ENCODE measurements at regions of chr11 and their contacts with region 1.

Region 1: GRCh38 chr11:125091247-125091876 is 20.1 kb downstream of the TMEM218 start:
- DNase-seq: no peak
- ATAC-seq: peak; percentile 86
- H3K4me3 ChIP-seq: no peak overlapping the region
- H3K27ac ChIP-seq: no peak overlapping the region
- H3K4me1 ChIP-seq: no peaks in the 10 kb centered on the region
- H3K27me3 ChIP-seq: no peaks in the 10 kb centered on the region
- CTCF ChIP-seq: peak; percentile 43 to 66 (median 54); a peak in 4 of 6 replicates
- EP300 ChIP-seq: no peak
- POLR2A ChIP-seq: no peak
- RAD21 ChIP-seq: peak; percentile 80

Region 2: DNA sequence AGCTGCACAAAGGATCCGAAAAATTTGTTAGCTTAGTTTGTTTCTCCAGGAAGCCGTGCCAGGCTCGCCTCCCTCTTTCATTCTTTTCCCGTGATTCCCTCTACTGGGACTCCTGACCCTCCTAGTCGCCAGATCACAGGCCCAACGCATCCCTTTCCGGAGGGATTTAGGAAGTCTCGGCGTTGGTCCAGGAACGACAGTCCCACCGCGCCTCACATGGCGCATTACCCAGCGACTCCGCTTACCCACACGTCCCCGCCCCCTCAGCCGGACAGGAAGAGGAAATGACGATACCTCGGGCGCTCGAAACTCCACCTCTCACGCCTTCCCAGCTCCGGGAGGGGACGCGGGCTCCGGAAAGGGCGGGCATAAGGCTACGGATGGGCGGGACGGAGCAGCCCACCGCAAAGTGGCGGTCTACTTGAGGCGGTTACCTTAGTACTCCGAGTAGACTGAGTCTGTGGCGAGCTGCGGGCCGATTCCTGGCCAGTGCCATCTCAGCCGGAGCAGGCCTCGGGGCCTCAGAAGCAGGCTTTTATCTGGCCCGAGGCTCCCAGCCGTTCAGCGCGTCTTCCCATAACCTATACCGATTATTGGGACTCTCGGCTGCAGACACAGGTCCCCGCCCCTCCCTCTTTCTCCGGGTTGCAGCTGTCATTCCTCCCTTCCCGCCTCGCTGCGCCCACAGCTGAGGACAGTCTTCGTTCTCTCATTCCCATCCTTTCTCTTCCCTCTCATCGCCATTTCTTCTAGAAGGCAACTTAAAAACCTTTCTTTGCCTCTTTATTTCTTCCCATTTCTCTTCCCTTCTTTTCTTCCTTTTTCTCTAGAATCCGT is 137.4 kb before region 1 on chr11 and contains the start of gene CCDC15:
- CTCF ChIA-PET with region 1: interaction called, 11 read pairs
- POLR2A ChIA-PET with region 1: no interaction called
- RAD21 ChIA-PET with region 1: interaction called, 3 read pairs
- SMC1A ChIA-PET with region 1: no interaction called
- in situ Hi-C with region 1: no loop called
- intact Hi-C with region 1: no loop called
- DNase-seq: peak; percentile 87
- ATAC-seq: peak; percentile 99
- H3K4me3 ChIP-seq: peak within 1 kb of the TSS; percentile 79
- H3K27ac ChIP-seq: peak within 1 kb of the TSS; percentile 54
- H3K4me1 ChIP-seq: no peaks in the 10 kb centered on the region; the same call in 1 of the 2 replicates
- H3K27me3 ChIP-seq: no peaks in the 10 kb centered on the region
- CTCF ChIP-seq: no peak
- EP300 ChIP-seq: 0 out of 4 replicates have a peak, but pooled peaks of 1 of the 2 experiments have one; percentile 18
- POLR2A ChIP-seq: peak; percentile 99
- RAD21 ChIP-seq: no peak
- polyA plus RNA-seq, gene CCDC15: 2.0 to 2.8 TPM

Region 3: DNA sequence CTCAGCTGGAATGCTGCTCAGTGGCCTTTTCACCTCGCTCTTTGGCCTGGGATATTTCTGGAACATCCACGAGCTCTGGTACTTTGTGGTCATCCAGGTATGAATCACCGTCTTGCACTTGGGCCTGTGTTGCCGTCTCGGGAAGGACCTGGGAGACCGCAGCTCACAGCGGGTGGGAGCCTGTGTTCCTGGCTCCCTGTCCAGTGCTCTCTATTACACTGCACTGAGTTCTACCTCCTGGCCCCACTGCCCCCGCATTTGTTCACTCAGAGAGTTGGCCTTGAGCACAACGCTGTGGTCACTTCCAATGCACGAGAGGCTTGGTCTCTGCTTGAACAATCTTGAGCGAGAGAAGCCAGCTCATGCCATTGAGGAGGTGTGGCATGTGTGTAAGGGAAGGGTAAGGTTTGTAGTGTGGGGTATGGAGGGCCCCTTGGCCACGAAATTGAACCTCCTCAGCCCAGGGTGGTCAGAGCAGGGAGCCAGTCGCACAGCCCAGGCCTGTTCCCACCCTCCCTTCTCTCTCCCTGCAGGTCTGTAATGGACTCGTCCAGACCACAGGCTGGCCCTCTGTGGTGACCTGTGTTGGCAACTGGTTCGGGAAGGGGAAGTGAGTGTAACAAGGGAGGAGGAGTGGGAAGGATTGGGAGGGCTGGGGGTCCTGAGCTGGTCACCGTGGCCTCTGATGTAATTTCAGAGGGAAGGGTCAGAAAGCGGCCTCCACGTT is 12.0 kb before region 1 on chr11:
- CTCF ChIA-PET with region 1: interaction called, 14 read pairs
- POLR2A ChIA-PET with region 1: no interaction called
- RAD21 ChIA-PET with region 1: no interaction called
- SMC1A ChIA-PET with region 1: interaction called, 12 read pairs
- in situ Hi-C with region 1: no loop called
- intact Hi-C with region 1: no loop called
- DNase-seq: no peak
- ATAC-seq: no peak
- H3K4me3 ChIP-seq: no peak overlapping the region
- H3K27ac ChIP-seq: no peak overlapping the region
- H3K4me1 ChIP-seq: no peaks in the 10 kb centered on the region
- H3K27me3 ChIP-seq: no peaks in the 10 kb centered on the region
- CTCF ChIP-seq: no peak
- EP300 ChIP-seq: no peak
- POLR2A ChIP-seq: no peak
- RAD21 ChIP-seq: no peak

Region 4: GRCh38 chr11:125105926-125106325 is 14.6 kb after region 1 on chr11:
- CTCF ChIA-PET with region 1: interaction called, 29 read pairs
- POLR2A ChIA-PET with region 1: interaction called, 10 read pairs
- RAD21 ChIA-PET with region 1: interaction called, 8 read pairs
- SMC1A ChIA-PET with region 1: interaction called, 17 read pairs
- in situ Hi-C with region 1: no loop called
- intact Hi-C with region 1: no loop called
- DNase-seq: no peak
- ATAC-seq: peak; percentile 34; the same call in 1 of the 3 replicates
- H3K4me3 ChIP-seq: no peak overlapping the region
- H3K27ac ChIP-seq: no peak overlapping the region
- H3K4me1 ChIP-seq: peaks cover 3% of the 10 kb centered on the region; the same call in 1 of the 2 replicates
- H3K27me3 ChIP-seq: no peaks in the 10 kb centered on the region
- CTCF ChIP-seq: no peak
- EP300 ChIP-seq: no peak
- POLR2A ChIP-seq: no peak
- RAD21 ChIP-seq: no peak

Region 5: GRCh38 chr11:125111343-125112207 is 20.2 kb after region 1 on chr11 and contains the start of gene TMEM218:
- CTCF ChIA-PET with region 1: interaction called, 29 read pairs
- POLR2A ChIA-PET with region 1: interaction called, 4 read pairs
- RAD21 ChIA-PET with region 1: interaction called, 10 read pairs
- SMC1A ChIA-PET with region 1: interaction called, 17 read pairs
- in situ Hi-C with region 1: no loop called
- intact Hi-C with region 1: no loop called
- DNase-seq: peak; percentile 100
- ATAC-seq: peak; percentile 99
- H3K4me3 ChIP-seq: peak within 1 kb of the TSS; percentile 96
- H3K27ac ChIP-seq: peak within 1 kb of the TSS; percentile 49
- H3K4me1 ChIP-seq: no peaks in the 10 kb centered on the region; the same call in 1 of the 2 replicates
- H3K27me3 ChIP-seq: no peaks in the 10 kb centered on the region
- CTCF ChIP-seq: no peak
- EP300 ChIP-seq: no peak
- POLR2A ChIP-seq: peak; percentile 76
- RAD21 ChIP-seq: no peak
- polyA plus RNA-seq, gene TMEM218: 11.2 to 15.5 TPM

Measured in GM12878 (cell line).